Activated CD4-positive, alpha-beta T cell treated with anti-CD3 and anti-CD28 coated beads for 36 hours (primary cell): ENCODE measurements at regions of chr2 and their contacts with region 1.

Region 1: GRCh38 chr2:195543902-195544894 is 112.8 kb upstream of the SLC39A10 start:
- DNase-seq: peak; percentile 63
- ATAC-seq: peak; percentile 99
- H3K4me3 Mint-ChIP-seq: peak overlapping the region; percentile 15
- H3K27ac Mint-ChIP-seq: peak overlapping the region; percentile 96
- H3K4me1 Mint-ChIP-seq: peaks cover 66% of the 10 kb centered on the region
- H3K27me3 Mint-ChIP-seq: no peaks in the 10 kb centered on the region

Region 2: DNA sequence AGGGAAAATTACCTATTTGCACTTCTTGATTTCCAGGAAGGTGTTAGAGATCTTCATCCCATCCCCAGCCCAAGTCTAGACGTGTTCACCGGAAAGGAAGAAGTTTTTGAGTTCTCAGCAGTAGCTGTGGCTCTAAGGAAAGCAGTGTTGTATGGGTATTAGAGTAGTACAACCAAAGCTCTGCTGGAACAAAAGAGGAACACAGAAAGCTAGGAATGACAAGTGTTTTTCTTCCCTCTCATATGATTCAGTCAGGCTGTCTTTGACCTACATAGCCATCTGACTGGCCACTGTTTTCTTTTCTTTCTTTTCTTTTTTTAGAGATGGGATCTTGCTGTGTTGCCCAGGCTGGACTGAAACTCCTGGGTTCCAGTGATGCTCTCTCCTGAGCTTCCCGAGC is 30.1 kb after region 1 on chr2:
- CTCF ChIA-PET with region 1: no interaction called
- POLR2A ChIA-PET with region 1: no interaction called
- intact Hi-C with region 1: no loop called
- DNase-seq: no peak
- ATAC-seq: no peak
- H3K4me3 Mint-ChIP-seq: no peak overlapping the region
- H3K27ac Mint-ChIP-seq: no peak overlapping the region
- H3K4me1 Mint-ChIP-seq: peaks cover 71% of the 10 kb centered on the region
- H3K27me3 Mint-ChIP-seq: no peaks in the 10 kb centered on the region

Region 3: DNA sequence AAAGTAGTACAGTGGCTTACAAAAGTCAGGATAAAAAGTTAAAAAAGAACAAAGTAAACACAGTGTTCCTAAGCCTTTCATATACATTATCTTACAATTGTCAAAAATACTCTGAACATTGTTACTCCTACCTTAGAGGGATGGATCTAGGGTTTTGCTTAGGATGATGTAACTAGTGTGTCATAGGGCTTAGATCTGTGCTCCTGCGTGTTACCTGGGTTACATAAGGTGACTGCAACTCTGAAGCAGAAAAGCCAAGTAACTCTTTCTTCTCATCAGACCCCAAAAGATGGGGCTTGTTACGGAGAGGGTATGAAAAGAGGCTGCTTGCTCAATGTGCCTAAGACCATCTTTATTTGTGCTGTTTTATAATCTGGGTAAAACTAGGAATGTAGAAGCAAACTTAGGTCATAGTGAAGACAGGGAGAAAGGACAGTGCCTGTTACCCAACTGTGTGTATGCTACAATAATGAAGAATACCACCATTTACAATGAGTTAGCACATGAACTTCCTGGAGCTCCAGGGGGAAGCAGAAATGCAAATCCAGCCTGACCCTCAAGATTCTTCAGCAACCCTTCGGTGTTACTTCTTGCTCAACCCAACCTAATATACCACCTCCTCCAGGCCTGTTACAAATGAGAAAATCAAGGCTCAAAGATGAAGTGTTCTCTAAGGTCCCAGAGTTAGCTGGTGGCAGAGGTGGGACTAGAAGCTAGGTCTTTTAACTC is 669.2 kb after region 1 on chr2:
- CTCF ChIA-PET with region 1: no interaction called
- POLR2A ChIA-PET with region 1: no interaction called
- intact Hi-C with region 1: loop called in 1 of 2 experiments (anchors 5 kb)
- DNase-seq: no peak
- ATAC-seq: no peak
- H3K4me3 Mint-ChIP-seq: no peak overlapping the region
- H3K27ac Mint-ChIP-seq: peak overlapping the region; percentile 99
- H3K4me1 Mint-ChIP-seq: peaks cover 84% of the 10 kb centered on the region
- H3K27me3 Mint-ChIP-seq: no peaks in the 10 kb centered on the region